ENCODE measurements at regions of chr14 and their contacts with region 1.

Region 1: DNA sequence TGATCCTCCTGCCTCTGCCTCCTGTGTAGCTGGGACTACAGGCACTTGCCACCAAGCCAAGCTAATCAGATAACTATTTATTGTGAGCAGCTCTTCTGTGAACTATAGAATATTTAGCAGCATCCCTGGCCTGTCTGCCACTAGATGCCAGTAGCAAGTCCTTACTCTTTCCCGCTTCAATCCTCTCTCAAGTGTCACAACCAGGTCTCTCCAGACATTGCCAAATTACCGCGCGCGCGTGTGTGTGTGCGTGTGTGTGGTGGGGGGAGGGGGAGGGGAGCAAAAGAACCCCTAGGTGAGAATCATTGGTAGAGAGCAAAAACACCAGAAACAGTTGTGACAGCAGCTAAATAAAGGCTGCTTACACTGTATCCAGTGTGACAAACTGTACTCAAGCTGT is 49.9 kb downstream of the PPP2R5E start:
- DNase-seq: peak; percentile 41
- ATAC-seq: peak; percentile 62
- H3K4me3 ChIP-seq: no peak overlapping the region
- H3K27ac ChIP-seq: peak overlapping the region; percentile 55
- H3K4me1 ChIP-seq: peaks cover 31% of the 10 kb centered on the region
- H3K27me3 ChIP-seq: no peaks in the 10 kb centered on the region
- CTCF ChIP-seq: peak; percentile 45

Region 2: GRCh38 chr14:63388763-63389431 is 104.3 kb before region 1 on chr14:
- CTCF ChIA-PET with region 1: interaction called, 5 read pairs
- POLR2A ChIA-PET with region 1: interaction called, 17 read pairs
- intact Hi-C with region 1: loop called (anchors 1 kb)
- DNase-seq: peak; percentile 78
- ATAC-seq: peak; percentile 96
- H3K4me3 ChIP-seq: no peak overlapping the region
- H3K27ac ChIP-seq: no peak overlapping the region
- H3K4me1 ChIP-seq: no peaks in the 10 kb centered on the region
- H3K27me3 ChIP-seq: no peaks in the 10 kb centered on the region
- CTCF ChIP-seq: peak; percentile 98

Region 3: DNA sequence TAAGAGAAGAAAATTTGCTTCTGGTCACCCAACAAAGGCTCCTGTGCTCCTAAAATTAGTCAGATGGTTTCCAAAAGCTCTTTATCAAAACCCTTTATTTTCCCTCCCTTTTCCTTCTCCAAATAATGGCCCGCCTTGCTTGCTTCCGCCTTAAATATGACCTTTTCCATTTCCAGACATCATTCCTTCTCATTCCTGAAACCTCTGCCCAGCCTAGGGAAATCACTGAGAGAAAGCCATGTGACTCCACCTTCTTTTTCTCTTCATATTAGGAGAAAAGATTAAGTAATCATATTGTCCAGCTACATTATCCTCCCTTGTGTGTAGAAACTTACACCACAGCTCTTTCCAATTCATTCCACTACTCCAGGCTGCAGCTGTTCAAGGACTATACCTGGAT is 98.8 kb before region 1 on chr14:
- CTCF ChIA-PET with region 1: interaction called, 5 read pairs
- POLR2A ChIA-PET with region 1: interaction called, 17 read pairs
- intact Hi-C with region 1: loop called (anchors 1 kb)
- DNase-seq: no peak
- ATAC-seq: no peak
- H3K4me3 ChIP-seq: no peak overlapping the region
- H3K27ac ChIP-seq: no peak overlapping the region
- H3K4me1 ChIP-seq: no peaks in the 10 kb centered on the region
- H3K27me3 ChIP-seq: no peaks in the 10 kb centered on the region
- CTCF ChIP-seq: no peak

Region 4: GRCh38 chr14:63401646-63402045 is 91.6 kb before region 1 on chr14:
- CTCF ChIA-PET with region 1: no interaction called
- POLR2A ChIA-PET with region 1: no interaction called
- intact Hi-C with region 1: loop called (anchors 2 kb)
- DNase-seq: no peak
- ATAC-seq: no peak
- H3K4me3 ChIP-seq: no peak overlapping the region
- H3K27ac ChIP-seq: no peak overlapping the region
- H3K4me1 ChIP-seq: peaks cover 13% of the 10 kb centered on the region
- H3K27me3 ChIP-seq: no peaks in the 10 kb centered on the region
- CTCF ChIP-seq: no peak

Region 5: GRCh38 chr14:63437953-63438757 is 55.1 kb before region 1 on chr14:
- CTCF ChIA-PET with region 1: interaction called, 15 read pairs
- POLR2A ChIA-PET with region 1: no interaction called
- intact Hi-C with region 1: loop called (anchors 2 kb)
- DNase-seq: peak; percentile 98
- ATAC-seq: peak; percentile 96
- H3K4me3 ChIP-seq: peak overlapping the region; percentile 56
- H3K27ac ChIP-seq: peak overlapping the region; percentile 80
- H3K4me1 ChIP-seq: peaks cover 40% of the 10 kb centered on the region
- H3K27me3 ChIP-seq: no peaks in the 10 kb centered on the region
- CTCF ChIP-seq: peak; percentile 56

Region 6: DNA sequence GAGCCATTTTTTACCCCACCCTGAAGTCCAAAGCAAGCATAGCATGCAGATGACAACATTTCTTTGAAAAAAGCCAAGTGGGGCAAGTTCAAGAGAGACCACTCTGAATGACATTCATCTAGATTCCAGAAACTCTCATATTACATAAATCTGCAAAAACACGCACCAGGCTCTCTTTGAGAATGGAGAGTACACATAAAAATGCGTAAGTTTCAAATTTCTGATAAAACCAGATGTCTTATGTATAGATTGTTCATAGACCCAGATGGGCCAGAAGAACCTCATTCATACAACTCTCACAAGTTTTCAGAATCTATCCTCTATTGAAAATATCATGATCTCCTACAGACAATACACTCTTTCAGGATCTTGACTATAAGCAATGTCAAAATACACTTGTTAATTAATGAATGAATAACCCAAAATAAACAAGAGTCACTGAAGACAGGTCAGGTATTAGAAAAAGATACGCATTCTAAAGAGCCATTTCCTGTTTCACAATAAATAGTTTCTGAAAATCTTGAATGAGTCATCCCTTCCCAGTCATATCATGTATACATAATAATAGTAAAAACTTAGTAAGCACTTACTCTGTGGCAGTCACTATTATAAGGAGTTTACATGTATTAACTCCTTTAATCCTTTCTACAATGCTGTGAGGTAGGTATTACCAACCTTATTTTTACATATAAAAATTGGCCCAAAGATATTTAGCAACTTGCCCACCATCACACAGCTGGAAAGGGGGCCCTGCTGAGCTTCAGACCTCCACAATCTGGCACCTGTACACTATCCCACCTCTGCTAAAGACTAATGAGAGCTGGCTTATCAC is 22.1 kb before region 1 on chr14:
- CTCF ChIA-PET with region 1: no interaction called
- POLR2A ChIA-PET with region 1: no interaction called
- intact Hi-C with region 1: loop called (anchors 1 kb)
- DNase-seq: peak; percentile 96
- ATAC-seq: peak; percentile 87
- H3K4me3 ChIP-seq: peak overlapping the region; percentile 25; the same call in 1 of the 2 replicates
- H3K27ac ChIP-seq: peak overlapping the region; percentile 89
- H3K4me1 ChIP-seq: peaks cover 55% of the 10 kb centered on the region
- H3K27me3 ChIP-seq: no peaks in the 10 kb centered on the region
- CTCF ChIP-seq: no peak

Region 7: DNA sequence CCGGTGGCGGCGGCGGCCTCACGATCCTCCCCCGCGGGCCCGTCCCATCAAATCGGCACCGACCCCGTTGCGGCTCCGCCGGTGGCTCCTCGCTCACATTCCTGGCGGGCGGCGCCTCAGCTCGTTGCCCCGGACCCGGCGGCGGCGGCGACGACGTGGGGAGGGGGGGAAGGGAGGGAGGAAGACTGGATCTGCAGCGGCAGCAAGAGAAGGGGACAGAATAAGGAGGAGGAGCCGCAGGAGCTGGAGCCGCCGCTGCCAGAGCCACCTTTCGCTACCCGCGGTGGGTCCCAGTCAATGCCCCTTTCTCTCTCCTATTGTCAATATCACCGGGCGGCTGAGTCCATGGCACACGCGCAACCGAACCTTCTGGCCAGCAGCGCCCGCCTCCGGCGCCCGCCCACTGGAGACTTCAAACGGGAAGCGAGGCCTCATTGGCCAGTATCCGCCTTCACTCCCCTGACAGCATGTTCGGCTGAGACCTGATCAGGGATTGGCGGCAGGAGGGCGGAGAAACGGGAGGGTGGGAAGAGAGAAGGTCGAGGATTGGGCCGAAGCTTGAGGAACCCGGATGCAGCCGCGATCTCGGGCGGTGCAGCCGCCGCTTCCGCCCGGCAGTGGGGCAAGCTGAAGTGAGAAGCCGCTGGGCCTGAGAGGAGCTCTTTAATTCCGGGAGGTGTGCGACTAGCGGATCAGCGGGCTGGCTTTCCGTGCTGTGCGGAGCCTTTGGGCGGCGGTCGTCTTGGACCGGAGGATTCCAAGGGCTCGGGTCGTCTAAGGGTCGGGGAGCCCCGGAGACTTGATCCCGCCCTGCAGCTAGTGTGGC is 50.0 kb after region 1 on chr14 and contains the start of gene PPP2R5E:
- CTCF ChIA-PET with region 1: interaction called, 12 read pairs
- POLR2A ChIA-PET with region 1: interaction called, 3 read pairs
- intact Hi-C with region 1: loop called (anchors 1 kb)
- DNase-seq: peak; percentile 99
- ATAC-seq: peak; percentile 94
- H3K4me3 ChIP-seq: peak within 1 kb of the TSS; percentile 90
- H3K27ac ChIP-seq: peak within 1 kb of the TSS; percentile 61
- H3K4me1 ChIP-seq: peaks cover 19% of the 10 kb centered on the region
- H3K27me3 ChIP-seq: no peaks in the 10 kb centered on the region
- CTCF ChIP-seq: no peak
- total RNA-seq, gene PPP2R5E: 17.2 and 26.4 TPM in 2 replicates

Measured in PC-3 (cell line).